ENCODE measurements at regions of chr17 and their contacts with region 1.

Region 1: GRCh38 chr17:28644985-28645939 is at the start of gene BLTP2:
- DNase-seq: peak; percentile 99
- H3K4me3 ChIP-seq: peak within 1 kb of the TSS; percentile 89 to 95
- H3K27ac ChIP-seq: peak within 1 kb of the TSS; percentile 60 to 85
- H3K4me1 ChIP-seq: peaks cover 6 to 14% of the 10 kb centered on the region in 2 experiments; a peak in 3 of 4 replicates
- H3K27me3 ChIP-seq: no peaks in the 10 kb centered on the region
- CTCF ChIP-seq: no peak
- EP300 ChIP-seq: no peak
- RAD21 ChIP-seq: no peak
- polyA plus RNA-seq, gene BLTP2: 46.4 and 77.8 TPM in 2 replicates

Region 2: DNA sequence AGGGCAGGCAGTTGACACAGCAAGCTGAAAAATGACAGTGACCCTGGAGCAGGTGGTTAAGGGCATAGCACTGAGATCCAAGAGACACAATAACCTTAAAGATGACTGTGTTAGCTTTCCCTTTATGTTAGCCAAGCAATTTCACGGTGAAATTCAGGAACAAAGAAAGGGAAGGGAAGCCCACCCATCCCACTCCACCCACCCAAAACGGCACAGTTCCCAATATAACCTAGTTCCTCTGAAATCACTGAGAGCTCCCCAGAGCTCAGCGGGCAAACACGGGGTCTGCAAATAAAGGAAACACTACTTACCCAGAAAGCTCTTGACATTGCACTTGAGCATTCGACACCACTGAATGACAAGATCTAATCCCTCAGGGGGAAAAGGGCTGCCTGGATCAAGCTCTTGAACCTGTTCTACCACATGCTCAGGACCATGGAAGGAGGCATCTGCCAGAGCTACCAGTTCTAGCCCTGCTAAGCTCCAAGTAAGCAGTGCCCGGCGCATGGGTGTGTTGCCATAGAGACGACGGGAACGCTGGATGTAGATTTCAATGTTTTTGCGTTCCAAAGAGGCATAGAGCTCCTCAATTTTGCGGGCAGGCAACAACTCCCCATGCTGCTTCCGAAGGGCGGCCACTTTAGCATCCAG is 10.9 kb before region 1 on chr17:
- CTCF ChIA-PET with region 1: interaction called, 43 read pairs
- POLR2A ChIA-PET with region 1: interaction called, 7 read pairs
- DNase-seq: no peak
- H3K4me3 ChIP-seq: no peak overlapping the region
- H3K27ac ChIP-seq: no peak overlapping the region
- H3K4me1 ChIP-seq: no peaks in the 10 kb centered on the region
- H3K27me3 ChIP-seq: no peaks in the 10 kb centered on the region
- CTCF ChIP-seq: no peak
- EP300 ChIP-seq: no peak
- RAD21 ChIP-seq: no peak

Region 3: DNA sequence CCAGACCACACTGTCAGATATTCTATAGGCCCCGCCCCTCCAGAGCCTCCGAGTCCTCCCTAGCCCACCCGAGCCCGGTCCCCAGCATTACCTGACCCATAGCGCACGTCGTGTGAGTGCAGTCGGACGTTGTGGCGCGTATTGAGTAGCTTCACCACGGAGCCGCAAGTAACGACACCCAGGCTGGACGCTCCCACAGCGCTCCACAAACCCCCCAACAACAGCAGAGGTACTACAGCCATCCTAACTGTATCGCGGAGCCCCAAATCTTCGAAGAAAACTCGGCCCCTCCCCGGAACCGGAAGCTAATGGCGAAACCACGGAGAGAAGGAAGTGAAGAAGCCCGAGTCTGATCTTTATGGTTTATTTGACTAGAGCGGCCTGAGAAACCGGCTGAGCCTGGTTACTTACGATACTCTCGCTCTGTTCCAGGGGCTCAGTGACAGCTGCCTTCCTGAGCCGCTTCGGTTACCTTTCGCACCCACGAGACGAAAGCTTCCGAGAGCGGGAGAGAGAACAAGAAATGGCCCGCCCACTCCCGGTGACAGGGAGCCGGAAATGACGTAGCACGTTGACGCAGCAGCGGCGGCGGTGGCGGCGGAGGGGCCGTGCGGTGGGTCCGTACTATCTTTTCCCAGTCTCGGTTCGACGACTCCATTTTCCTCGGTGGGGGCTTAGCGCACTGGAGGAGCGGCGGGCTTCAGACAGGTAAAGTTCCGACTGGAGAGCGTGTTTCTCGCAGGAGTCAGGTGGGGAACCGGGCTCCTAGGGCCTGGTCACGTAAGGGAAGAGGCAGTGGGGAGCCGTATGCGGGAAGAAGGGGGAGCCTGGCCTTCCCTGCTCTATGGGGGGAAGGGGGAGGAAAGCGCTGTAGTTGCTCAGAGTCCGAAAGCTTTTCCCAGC is 16.6 kb after region 1 on chr17 and contains the starts of genes SDF2 and SUPT6H:
- CTCF ChIA-PET with region 1: interaction called, 50 read pairs
- POLR2A ChIA-PET with region 1: interaction called, 7 read pairs
- DNase-seq: peak; percentile 95
- H3K4me3 ChIP-seq: peak within 1 kb of the TSS; percentile 91 to 94
- H3K27ac ChIP-seq: peak within 1 kb of the TSS; percentile 96
- H3K4me1 ChIP-seq: peaks cover 7 to 13% of the 10 kb centered on the region in 2 experiments; a peak in 3 of 4 replicates
- H3K27me3 ChIP-seq: no peaks in the 10 kb centered on the region
- CTCF ChIP-seq: no peak
- EP300 ChIP-seq: no peak
- RAD21 ChIP-seq: no peak
- polyA plus RNA-seq, gene SDF2: 108 and 114 TPM in 2 replicates
- polyA plus RNA-seq, gene SUPT6H: 26.7 and 26.9 TPM in 2 replicates